ENCODE measurements at regions of chrX and their contacts with region 1.

Region 1: DNA sequence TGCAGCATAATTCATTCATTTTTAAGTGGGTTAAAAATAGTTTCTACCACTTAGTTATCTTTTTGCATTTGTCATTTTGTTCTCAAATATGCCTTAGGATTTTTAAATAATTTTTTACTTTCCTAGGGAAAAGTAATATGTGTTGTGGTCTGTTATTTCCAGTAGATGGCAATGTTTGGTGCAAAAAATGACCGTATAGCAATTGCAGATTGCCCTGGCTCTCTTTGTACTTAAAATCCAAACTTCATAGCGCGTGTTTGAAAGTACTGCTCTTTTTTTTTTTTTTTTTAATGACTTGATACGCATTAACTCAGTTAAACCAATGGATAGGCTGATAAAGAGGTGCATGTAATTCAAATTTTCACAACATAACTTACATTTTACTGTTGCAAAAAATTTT is 74.4 kb upstream of the RBMX start:
- DNase-seq: no peak
- H3K4me3 ChIP-seq: no peak overlapping the region
- H3K27ac ChIP-seq: no peak overlapping the region
- H3K4me1 ChIP-seq: no peaks in the 10 kb centered on the region
- H3K27me3 ChIP-seq: no peaks in the 10 kb centered on the region
- CTCF ChIP-seq: peak in 1 of 3 donors; percentile 12
- EP300 ChIP-seq: no peak
- POLR2A ChIP-seq: no peak

Region 2: GRCh38 chrX:137051978-137052642 is 97.2 kb after region 1 on chrX:
- intact Hi-C with region 1: loop called in 1 of 4 experiments (anchors 5 kb)
- DNase-seq: peak; percentile 54 to 78 (median 72)
- H3K4me3 ChIP-seq: peak overlapping the region; percentile 22
- H3K27ac ChIP-seq: no peak overlapping the region
- H3K4me1 ChIP-seq: no peaks in the 10 kb centered on the region
- H3K27me3 ChIP-seq: no peaks in the 10 kb centered on the region
- CTCF ChIP-seq: peak in 2 of 3 donors; percentile 43 to 50
- EP300 ChIP-seq: no peak
- POLR2A ChIP-seq: no peak